SK-N-SH (cell line): ENCODE measurements at regions of chr1 and their contacts with region 1.

Region 1: DNA sequence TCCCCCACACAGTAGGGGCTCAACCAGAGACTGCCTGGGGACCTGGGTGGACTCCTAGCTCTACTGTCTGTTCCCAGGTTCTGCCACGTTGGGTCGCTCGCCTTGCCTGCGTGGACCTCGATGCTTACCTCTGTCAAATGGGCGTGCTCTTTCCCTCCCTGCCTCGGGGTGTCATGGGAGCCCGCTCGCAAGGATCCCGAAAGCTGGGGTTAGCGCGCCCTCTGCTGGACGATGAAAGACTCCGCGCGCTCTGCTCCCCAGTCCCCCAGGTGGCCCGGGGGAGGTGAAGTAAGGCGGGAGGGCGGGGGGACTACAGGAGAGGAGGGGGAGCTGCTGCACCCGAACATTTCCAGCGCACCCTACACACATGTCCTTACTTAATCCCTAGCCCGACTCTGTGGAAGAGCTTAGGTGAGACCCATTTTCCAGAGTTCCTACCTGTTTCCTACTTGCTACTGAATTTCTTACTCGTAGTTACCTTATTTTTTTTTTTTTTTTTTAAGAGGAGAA is 2.3 kb upstream of the BSND start:
- DNase-seq: peak; percentile 96
- H3K4me3 ChIP-seq: peak overlapping the region in 1 of 2 experiments; percentile 49; a peak in 1 of 4 replicates
- H3K27ac ChIP-seq: no peak overlapping the region
- H3K4me1 ChIP-seq: peaks cover 0 to 3% of the 10 kb centered on the region in 2 experiments; a peak in 1 of 4 replicates
- H3K27me3 ChIP-seq: no peaks in the 10 kb centered on the region; the same call in 1 of the 2 replicates
- CTCF ChIP-seq: peak; percentile 87
- EP300 ChIP-seq: no peak
- RAD21 ChIP-seq: peak; percentile 86

Region 2: DNA sequence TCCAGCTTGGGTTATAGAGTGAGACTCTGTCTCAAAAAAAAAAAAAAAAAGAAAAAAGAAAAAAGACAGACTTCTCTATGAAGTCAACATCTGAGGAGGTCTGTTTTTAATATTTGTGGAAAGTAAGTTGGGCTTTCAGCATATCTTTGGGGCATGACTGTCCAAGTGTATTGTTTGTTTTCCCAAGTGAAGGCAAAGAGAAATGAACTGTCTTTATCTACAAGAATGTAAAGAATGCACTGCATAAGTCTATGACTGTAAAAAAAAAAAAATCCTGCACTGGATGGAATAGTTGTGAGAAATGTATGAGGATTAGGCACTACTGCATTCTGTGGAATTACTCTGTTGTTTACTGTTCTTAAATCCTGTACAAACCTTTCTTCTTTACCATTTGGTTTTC is 61.5 kb before region 1 on chr1:
- CTCF ChIA-PET with region 1: interaction called, 13 read pairs
- POLR2A ChIA-PET with region 1: no interaction called
- DNase-seq: no peak
- H3K4me3 ChIP-seq: no peak overlapping the region
- H3K27ac ChIP-seq: peak overlapping the region; percentile 1 to 91; a peak in 3 of 4 replicates
- H3K4me1 ChIP-seq: peaks cover 0 to 38% of the 10 kb centered on the region in 2 experiments; a peak in 3 of 4 replicates
- H3K27me3 ChIP-seq: no peaks in the 10 kb centered on the region
- CTCF ChIP-seq: no peak
- EP300 ChIP-seq: peak in 1 of 2 experiments; percentile 45; a peak in 1 of 4 replicates
- RAD21 ChIP-seq: no peak

Region 3: DNA sequence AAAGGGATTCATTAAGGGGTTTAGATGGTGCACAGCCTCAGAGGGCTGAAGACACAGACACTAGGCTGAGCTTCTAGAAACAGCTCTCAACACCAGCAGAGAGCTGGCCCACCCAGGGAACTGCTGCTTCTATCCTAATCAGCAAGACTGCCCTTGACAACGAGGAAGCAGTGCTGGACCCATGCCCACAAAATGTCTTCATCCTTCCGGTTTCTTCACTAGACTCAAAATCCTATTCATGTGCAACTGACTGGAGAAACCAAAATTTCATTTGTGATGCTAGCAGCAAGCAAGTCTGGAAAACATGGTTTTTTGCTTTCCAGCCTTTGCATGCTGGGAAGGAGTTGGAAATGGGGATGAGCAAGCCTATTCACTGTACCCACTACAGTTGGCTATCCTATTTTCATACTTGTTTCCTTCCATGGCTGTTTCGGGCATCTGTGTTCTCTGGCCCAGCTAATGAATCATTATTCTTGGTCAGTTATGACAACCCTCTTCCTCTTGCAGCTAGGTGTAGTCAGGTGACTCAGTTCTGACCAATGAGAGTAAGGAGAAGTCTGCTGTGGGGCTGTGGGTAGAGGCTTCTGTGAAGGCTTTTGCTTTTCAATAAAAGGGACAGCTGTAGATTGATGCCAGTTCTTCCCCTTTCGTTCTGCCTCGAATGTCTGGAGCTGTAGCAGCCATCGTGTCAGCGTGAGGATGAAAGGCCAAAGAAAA is 30.6 kb before region 1 on chr1:
- CTCF ChIA-PET with region 1: interaction called, 60 read pairs
- POLR2A ChIA-PET with region 1: no interaction called
- DNase-seq: no peak
- H3K4me3 ChIP-seq: no peak overlapping the region
- H3K27ac ChIP-seq: no peak overlapping the region
- H3K4me1 ChIP-seq: peaks cover 0 to 14% of the 10 kb centered on the region in 2 experiments; a peak in 1 of 4 replicates
- H3K27me3 ChIP-seq: no peaks in the 10 kb centered on the region
- CTCF ChIP-seq: no peak
- EP300 ChIP-seq: no peak
- RAD21 ChIP-seq: no peak

Region 4: DNA sequence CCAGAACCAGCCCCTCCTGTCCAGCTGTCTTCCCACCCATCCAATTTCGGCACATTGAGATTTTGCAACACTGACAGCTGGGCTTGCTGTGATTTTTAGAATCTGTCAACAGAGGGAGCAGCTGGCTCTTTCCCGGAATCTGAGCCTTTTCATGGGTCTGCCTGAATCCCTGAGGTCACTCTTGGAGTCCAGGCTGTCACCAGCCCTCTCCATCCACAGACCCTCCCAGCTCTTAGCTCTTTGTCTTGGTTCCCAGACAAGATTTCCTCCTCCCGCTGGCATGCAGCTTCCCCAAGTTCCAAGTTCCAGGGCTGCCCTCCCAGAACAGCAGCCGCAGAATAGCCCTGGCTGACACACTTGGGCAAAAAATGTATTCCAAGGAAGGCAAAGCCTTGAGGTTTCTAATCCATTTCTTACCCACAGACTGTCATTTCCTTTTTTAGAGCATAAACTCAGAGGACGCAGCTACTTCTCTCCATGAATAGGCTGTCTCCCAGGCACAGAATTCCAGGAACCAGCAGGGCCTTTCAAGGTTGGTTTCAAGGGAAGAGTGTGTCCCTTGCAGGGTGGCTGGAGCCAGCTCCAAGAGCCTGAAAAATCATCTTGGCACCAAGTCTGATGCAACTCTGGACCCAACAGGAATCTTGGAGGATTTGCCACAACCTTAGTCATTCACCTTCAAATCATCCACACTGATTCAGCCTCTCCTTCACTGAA is 23.1 kb before region 1 on chr1:
- CTCF ChIA-PET with region 1: interaction called, 60 read pairs
- POLR2A ChIA-PET with region 1: no interaction called
- DNase-seq: peak; percentile 65
- H3K4me3 ChIP-seq: no peak overlapping the region
- H3K27ac ChIP-seq: no peak overlapping the region
- H3K4me1 ChIP-seq: no peaks in the 10 kb centered on the region; a peak in 1 of 4 replicates
- H3K27me3 ChIP-seq: no peaks in the 10 kb centered on the region
- CTCF ChIP-seq: peak; percentile 43
- EP300 ChIP-seq: no peak
- RAD21 ChIP-seq: peak; percentile 61

Region 5: GRCh38 chr1:54980528-54981241 is 15.7 kb before region 1 on chr1 and contains the start of gene TMEM61:
- CTCF ChIA-PET with region 1: interaction called, 56 read pairs
- POLR2A ChIA-PET with region 1: no interaction called
- DNase-seq: peak; percentile 73
- H3K4me3 ChIP-seq: peak within 1 kb of the TSS in 1 of 2 experiments; percentile 40; a peak in 2 of 4 replicates
- H3K27ac ChIP-seq: no peak within 1 kb of the TSS
- H3K4me1 ChIP-seq: no peaks in the 10 kb centered on the region; a peak in 1 of 4 replicates
- H3K27me3 ChIP-seq: no peaks in the 10 kb centered on the region; the same call in 1 of the 2 replicates
- CTCF ChIP-seq: no peak
- EP300 ChIP-seq: no peak
- RAD21 ChIP-seq: no peak
- polyA plus RNA-seq, gene TMEM61: not detected in 2 replicates

Region 6: GRCh38 chr1:55007625-55008024 is 11.2 kb after region 1 on chr1:
- CTCF ChIA-PET with region 1: interaction called, 159 read pairs
- POLR2A ChIA-PET with region 1: no interaction called
- DNase-seq: no peak
- H3K4me3 ChIP-seq: no peak overlapping the region
- H3K27ac ChIP-seq: 0 out of 4 replicates have a peak overlapping the region, but pooled peaks of 1 of the 2 experiments have one; percentile 3
- H3K4me1 ChIP-seq: peaks cover 0 to 4% of the 10 kb centered on the region in 2 experiments; a peak in 1 of 4 replicates
- H3K27me3 ChIP-seq: no peaks in the 10 kb centered on the region
- CTCF ChIP-seq: no peak
- EP300 ChIP-seq: no peak
- RAD21 ChIP-seq: no peak

Region 7: DNA sequence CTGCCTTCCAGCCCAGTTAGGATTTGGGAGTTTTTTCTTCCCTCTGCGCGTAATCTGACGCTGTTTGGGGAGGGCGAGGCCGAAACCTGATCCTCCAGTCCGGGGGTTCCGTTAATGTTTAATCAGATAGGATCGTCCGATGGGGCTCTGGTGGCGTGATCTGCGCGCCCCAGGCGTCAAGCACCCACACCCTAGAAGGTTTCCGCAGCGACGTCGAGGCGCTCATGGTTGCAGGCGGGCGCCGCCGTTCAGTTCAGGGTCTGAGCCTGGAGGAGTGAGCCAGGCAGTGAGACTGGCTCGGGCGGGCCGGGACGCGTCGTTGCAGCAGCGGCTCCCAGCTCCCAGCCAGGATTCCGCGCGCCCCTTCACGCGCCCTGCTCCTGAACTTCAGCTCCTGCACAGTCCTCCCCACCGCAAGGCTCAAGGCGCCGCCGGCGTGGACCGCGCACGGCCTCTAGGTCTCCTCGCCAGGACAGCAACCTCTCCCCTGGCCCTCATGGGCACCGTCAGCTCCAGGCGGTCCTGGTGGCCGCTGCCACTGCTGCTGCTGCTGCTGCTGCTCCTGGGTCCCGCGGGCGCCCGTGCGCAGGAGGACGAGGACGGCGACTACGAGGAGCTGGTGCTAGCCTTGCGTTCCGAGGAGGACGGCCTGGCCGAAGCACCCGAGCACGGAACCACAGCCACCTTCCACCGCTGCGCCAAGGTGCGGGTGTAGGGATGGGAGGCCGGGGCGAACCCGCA is 43.1 kb after region 1 on chr1 and contains the start of gene PCSK9:
- CTCF ChIA-PET with region 1: interaction called, 10 read pairs
- POLR2A ChIA-PET with region 1: no interaction called
- DNase-seq: peak; percentile 73
- H3K4me3 ChIP-seq: peak within 1 kb of the TSS; percentile 9 to 20; a peak in 2 of 4 replicates
- H3K27ac ChIP-seq: no peak within 1 kb of the TSS
- H3K4me1 ChIP-seq: peaks cover 0 to 16% of the 10 kb centered on the region in 2 experiments; a peak in 1 of 4 replicates
- H3K27me3 ChIP-seq: peaks cover 58% of the 10 kb centered on the region
- CTCF ChIP-seq: no peak
- EP300 ChIP-seq: no peak
- RAD21 ChIP-seq: no peak
- polyA plus RNA-seq, gene PCSK9: 0.02 and 0.03 TPM in 2 replicates